Common myeloid progenitor, CD34-positive (primary cell): ENCODE measurements at regions of chr3 and their contacts with region 1.

Region 1: DNA sequence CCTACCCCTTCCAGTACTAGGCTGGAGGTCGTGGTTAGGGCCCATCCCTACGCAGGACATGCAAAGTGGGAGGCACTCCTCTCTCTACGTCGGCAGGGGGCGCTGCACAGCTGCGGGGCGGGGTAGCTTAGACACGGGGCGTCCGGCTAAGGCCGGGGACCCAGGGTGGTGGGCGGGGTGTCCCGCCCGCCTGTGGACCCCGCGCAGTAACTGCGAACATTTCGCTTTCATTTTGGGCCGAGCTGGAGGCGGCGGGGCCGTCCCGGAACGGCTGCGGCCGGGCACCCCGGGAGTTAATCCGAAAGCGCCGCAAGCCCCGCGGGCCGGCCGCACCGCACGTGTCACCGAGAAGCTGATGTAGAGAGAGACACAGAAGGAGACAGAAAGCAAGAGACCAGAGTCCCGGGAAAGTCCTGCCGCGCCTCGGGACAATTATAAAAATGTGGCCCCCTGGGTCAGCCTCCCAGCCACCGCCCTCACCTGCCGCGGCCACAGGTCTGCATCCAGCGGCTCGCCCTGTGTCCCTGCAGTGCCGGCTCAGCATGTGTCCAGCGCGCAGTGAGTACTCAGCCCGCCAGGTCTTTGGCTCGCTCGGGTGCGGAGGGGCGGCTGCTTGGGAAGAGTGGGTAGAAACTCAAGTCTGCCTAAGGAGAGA is at the start of gene IL12A:
- DNase-seq: peak; percentile 90 to 93 (median 93)
- H3K4me3 ChIP-seq: peak within 1 kb of the TSS; percentile 68 to 93 (median 75)
- H3K27ac ChIP-seq: peak within 1 kb of the TSS; percentile 19 to 35
- H3K4me1 ChIP-seq: peaks cover 1 to 34% (median 20%) of the 10 kb centered on the region in 4 experiments
- H3K27me3 ChIP-seq: no peaks in the 10 kb centered on the region

Region 2: DNA sequence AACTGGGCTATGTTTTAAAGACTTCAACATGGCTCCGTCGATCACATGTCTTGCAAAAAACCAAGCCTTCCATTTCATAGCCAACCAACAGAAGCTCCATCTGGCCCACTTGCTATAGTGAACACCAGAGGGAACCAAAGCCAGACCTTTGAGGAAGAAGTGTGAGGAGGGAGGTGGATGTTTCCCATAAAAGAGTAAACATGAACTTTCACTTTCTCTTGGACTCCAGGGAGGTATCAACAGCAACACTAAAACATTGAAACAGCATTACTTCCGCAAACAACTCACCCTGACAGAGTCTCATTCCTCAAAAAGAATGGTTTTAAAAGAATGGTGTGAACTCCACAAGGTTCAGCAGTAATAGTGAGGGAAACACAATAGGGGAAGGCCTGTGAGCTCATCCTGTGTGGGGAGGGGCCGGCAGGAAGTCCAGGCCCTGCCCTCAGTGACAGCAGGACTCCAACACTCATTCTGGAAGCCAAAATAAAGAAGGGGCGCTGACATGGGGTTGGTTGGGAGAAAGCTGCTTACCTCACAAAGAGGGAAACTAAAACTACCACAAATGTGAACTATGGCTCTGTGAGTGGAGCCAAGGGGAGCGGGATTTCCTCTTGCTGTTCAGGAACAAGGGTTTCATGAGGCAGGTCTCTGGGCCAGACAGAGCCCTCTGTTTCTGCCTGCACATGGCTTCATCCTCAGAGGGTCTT is 59.2 kb before region 1 on chr3:
- CTCF ChIA-PET with region 1: interaction called, 47 read pairs
- POLR2A ChIA-PET with region 1: no interaction called
- DNase-seq: peak; percentile 95 to 97 (median 97)
- H3K4me3 ChIP-seq: peak overlapping the region in 2 of 7 experiments; percentile 13 to 20
- H3K27ac ChIP-seq: peak overlapping the region in 1 of 2 experiments; percentile 73
- H3K4me1 ChIP-seq: peaks cover 0 to 27% (median 23%) of the 10 kb centered on the region in 4 experiments
- H3K27me3 ChIP-seq: no peaks in the 10 kb centered on the region

Region 3: GRCh38 chr3:159947220-159947619 is 41.5 kb before region 1 on chr3:
- CTCF ChIA-PET with region 1: interaction called, 28 read pairs
- POLR2A ChIA-PET with region 1: no interaction called
- DNase-seq: no peak
- H3K4me3 ChIP-seq: no peak overlapping the region
- H3K27ac ChIP-seq: no peak overlapping the region
- H3K4me1 ChIP-seq: peaks cover 0 to 31% (median 17%) of the 10 kb centered on the region in 4 experiments
- H3K27me3 ChIP-seq: no peaks in the 10 kb centered on the region

Region 4: DNA sequence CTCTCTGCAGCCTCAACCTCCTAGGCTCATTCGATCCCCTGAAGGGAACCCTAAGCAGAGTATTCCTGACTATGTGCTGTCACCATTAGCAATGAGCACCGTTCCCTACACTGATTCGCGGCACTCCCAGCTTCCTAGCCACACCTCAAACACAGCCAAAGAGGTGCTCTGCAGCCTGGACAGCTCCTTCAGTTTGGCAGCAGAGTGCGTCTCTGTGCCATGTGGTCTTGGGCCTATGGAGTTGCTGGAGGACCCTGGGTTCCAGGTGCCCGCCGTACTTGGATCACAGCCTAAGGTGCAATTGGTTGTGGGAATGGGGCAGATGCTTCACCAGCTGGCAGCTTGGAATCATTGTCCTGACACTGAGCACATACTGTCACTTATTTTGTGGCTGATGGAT is 17.4 kb before region 1 on chr3:
- CTCF ChIA-PET with region 1: interaction called, 54 read pairs
- POLR2A ChIA-PET with region 1: interaction called, 3 read pairs
- DNase-seq: no peak
- H3K4me3 ChIP-seq: no peak overlapping the region
- H3K27ac ChIP-seq: no peak overlapping the region
- H3K4me1 ChIP-seq: no peaks in the 10 kb centered on the region
- H3K27me3 ChIP-seq: no peaks in the 10 kb centered on the region

Region 5: GRCh38 chr3:159978353-159978752 is 10.4 kb before region 1 on chr3:
- CTCF ChIA-PET with region 1: interaction called, 54 read pairs
- POLR2A ChIA-PET with region 1: interaction called, 3 read pairs
- DNase-seq: peak in 2 of 3 donors; percentile 77 to 84
- H3K4me3 ChIP-seq: peak overlapping the region in 1 of 7 experiments; percentile 23
- H3K27ac ChIP-seq: peak overlapping the region; percentile 9 to 44
- H3K4me1 ChIP-seq: peaks cover 0 to 10% (median 0%) of the 10 kb centered on the region in 4 experiments
- H3K27me3 ChIP-seq: no peaks in the 10 kb centered on the region

Region 6: GRCh38 chr3:160368804-160369203 is 380.1 kb after region 1 on chr3:
- CTCF ChIA-PET with region 1: no interaction called
- POLR2A ChIA-PET with region 1: no interaction called
- DNase-seq: peak; percentile 66 to 96 (median 92)
- H3K4me3 ChIP-seq: no peak overlapping the region
- H3K27ac ChIP-seq: no peak overlapping the region
- H3K4me1 ChIP-seq: peaks cover 3 to 10% (median 5%) of the 10 kb centered on the region in 4 experiments
- H3K27me3 ChIP-seq: peaks cover 0 to 49% (median 19%) of the 10 kb centered on the region in 5 experiments